Thyroid gland (tissue), 4 donors: ENCODE measurements at regions of chr1 and their contacts with region 1.

Region 1: DNA sequence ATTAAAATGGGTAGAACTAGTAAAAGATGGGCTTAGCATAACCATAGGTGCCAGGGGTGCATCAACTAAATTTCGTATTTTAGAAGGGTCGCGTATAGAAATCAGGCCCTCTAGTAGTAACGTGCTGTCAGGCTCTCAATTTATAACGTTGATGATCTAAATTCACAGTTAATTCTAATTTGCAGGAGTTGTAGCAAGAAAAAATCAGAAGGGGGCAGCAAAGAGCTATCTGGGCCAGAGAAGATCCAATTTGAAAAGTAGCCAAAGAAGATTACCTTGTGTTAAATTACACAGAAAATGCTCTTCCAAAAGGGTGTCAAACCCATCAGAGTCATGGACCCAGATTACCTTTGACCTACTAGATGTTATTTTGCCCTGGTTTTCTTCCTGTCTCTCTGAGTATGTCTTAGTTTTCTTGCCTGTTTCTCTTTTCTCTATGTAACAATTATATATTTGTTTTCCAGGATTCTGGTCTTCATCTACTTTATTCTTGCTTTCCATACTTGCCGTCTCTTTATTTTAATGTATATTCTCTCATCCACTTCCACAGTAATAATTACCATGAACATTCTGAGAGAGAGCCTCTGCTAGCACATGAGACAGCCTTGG is 1030.9 kb downstream of the AMY1C start:
- DNase-seq: no peak
- H3K4me3 ChIP-seq: no peak overlapping the region
- H3K27ac ChIP-seq: no peak overlapping the region
- H3K4me1 ChIP-seq: no peaks in the 10 kb centered on the region
- H3K27me3 ChIP-seq: no peaks in the 10 kb centered on the region
- CTCF ChIP-seq: peak in 5 of 6 experiments; percentile 35 to 75 (median 61)
- POLR2A ChIP-seq: no peak

Region 2: GRCh38 chr1:104018922-104019674 is 761.5 kb before region 1 on chr1:
- intact Hi-C with region 1: no loop called
- DNase-seq: no peak
- H3K4me3 ChIP-seq: no peak overlapping the region
- H3K27ac ChIP-seq: no peak overlapping the region
- H3K4me1 ChIP-seq: no peaks in the 10 kb centered on the region
- H3K27me3 ChIP-seq: no peaks in the 10 kb centered on the region
- CTCF ChIP-seq: no peak
- POLR2A ChIP-seq: no peak

Region 3: GRCh38 chr1:105087496-105087895 is 306.9 kb after region 1 on chr1:
- intact Hi-C with region 1: no loop called
- DNase-seq: no peak
- H3K4me3 ChIP-seq: no peak overlapping the region
- H3K27ac ChIP-seq: no peak overlapping the region
- H3K4me1 ChIP-seq: no peaks in the 10 kb centered on the region
- H3K27me3 ChIP-seq: no peaks in the 10 kb centered on the region
- CTCF ChIP-seq: no peak
- POLR2A ChIP-seq: no peak

Region 4: DNA sequence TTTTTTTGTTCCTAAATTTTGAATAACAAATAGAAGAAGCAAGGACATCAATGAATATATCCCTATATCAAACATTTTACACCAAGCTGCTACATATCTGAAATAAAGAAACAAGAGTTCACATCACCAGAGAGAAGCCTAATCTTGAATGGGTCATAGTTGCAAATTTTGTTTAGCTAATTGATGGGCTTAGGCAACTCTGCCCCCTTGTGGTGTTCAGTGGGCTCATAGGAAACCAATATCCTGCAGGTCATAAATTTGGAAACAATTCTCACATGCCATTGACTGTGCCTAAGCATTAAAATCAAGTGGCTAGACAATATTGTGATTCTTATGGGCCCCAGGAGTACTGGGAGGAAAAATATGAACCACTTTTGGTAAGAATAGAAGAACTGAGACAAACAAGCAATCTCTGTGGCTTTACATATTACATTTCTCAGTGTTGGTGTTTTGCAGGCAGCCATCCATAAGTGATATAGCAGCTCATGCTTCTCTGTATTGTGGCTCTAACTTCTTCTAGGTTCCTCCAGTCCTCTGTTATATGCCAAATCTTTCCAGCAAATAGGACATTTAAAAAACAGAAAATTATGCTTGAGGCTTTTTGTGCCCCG is 1013.1 kb after region 1 on chr1:
- intact Hi-C with region 1: loop called (anchors 10 kb)
- DNase-seq: peak; percentile 59 to 67
- H3K4me3 ChIP-seq: no peak overlapping the region
- H3K27ac ChIP-seq: no peak overlapping the region
- H3K4me1 ChIP-seq: no peaks in the 10 kb centered on the region
- H3K27me3 ChIP-seq: no peaks in the 10 kb centered on the region
- CTCF ChIP-seq: peak in 5 of 6 experiments; percentile 38 to 70 (median 64)
- POLR2A ChIP-seq: no peak